Astrocyte of the cerebellum (primary cell): ENCODE measurements at regions of chr18 and their contacts with region 1.

Region 1: GRCh38 chr18:2395427-2396161 is 175.7 kb downstream of the METTL4 start:
- DNase-seq: no peak
- H3K4me3 ChIP-seq: no peak overlapping the region
- CTCF ChIP-seq: no peak

Region 2: DNA sequence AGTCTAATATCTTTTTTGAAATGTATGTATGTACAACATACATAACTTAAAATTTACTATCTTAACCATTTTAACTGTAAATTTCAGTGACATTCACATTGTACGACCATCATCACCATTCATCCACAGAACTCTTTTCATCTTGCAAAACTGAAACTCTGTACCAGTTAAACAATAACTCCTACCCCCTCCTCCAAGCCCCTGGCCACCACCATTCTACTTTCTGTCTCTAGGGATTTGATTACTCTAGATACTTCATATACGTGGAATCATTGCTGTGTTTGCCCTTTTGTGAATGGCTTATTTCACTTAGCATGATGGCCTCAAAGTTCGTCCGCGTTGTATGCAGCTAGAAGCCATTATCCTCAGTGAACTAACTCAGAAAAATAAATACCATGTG is 41.3 kb before region 1 on chr18:
- in situ Hi-C with region 1: loop called (anchors 5 kb)
- DNase-seq: no peak
- H3K4me3 ChIP-seq: no peak overlapping the region
- CTCF ChIP-seq: no peak